Posterior cingulate gyrus (tissue), 11 donors: ENCODE measurements at regions of chr22 and their contacts with region 1.

Region 1: DNA sequence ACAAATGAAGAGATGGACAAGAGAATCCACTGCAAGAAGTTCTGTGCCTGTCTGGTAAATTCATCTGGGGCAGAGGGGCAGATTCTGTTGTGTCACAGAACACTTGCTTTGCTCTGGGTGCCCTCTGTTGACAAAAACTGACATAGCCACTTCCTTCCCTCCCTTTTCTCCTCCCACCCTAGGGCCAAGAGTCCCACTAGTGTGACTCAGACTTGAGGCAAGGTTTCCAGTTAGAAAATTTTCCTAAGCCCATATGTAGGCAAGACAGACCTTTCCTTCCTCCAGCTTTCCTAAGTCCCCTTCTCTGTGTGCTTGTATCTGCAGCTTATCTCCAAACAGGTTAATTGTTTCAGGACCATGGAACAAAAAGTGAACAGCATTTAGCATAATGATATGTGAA is 106.8 kb downstream of the RBFOX2 start:
- DNase-seq: peak in 3 of 10 donors; percentile 20 to 54 (median 25)

Region 2: DNA sequence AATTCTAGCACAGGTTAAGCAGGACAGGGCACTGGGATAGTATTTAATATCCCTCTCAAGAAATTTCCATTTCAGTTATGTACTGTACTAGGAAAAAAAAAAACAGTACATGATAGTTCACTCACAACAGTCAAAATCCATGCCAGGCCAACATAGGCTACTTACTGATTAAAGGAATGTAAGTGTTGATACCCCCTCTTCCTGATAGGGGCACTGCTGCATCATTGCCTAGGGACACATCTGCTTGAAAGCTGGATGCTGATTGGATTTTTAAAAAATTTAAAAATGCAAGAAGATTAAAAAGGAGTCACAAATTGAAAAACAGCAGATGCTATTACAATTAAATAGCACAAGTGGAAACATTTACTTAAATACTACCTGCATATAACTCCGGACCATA is 160.7 kb before region 1 on chr22:
- intact Hi-C with region 1: loop called (anchors 5 kb)
- DNase-seq: no peak

Region 3: GRCh38 chr22:35995772-35996171 is 74.0 kb after region 1 on chr22:
- intact Hi-C with region 1: no loop called
- DNase-seq: peak in 1 of 10 donors; percentile 16

Region 4: DNA sequence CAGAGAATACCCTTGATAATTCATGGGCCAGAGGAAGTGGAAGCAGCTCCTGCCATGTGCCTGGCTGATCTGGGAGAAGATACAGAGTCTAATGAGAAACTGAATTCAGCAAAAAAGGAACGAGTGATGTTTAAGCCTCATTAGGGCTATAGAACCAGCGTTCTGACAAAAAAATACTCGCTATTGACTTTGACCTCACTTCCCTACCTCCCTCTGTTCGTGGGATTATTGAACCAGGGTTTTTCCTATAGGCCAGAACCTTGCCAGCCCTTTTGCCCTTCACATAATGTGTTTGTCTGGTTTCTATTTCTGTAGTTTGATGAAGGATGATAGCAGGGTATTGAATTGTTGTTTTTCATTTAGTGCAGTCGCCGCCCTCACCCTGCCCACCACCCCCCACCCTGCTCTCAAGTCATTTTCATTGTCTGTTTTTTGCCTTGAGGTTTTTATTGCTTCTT is 114.4 kb after region 1 on chr22:
- intact Hi-C with region 1: no loop called
- DNase-seq: no peak